OCI-LY7 (cell line): ENCODE measurements at regions of chr10 and their contacts with region 1.

Region 1: GRCh38 chr10:20927456-20927855 is 30.3 kb upstream of the NEBL start:
- DNase-seq: no peak
- H3K4me3 ChIP-seq: no peak overlapping the region
- H3K27ac ChIP-seq: no peak overlapping the region
- H3K4me1 ChIP-seq: no peaks in the 10 kb centered on the region
- CTCF ChIP-seq: no peak

Region 2: GRCh38 chr10:20877986-20878983 is 49.2 kb before region 1 on chr10:
- CTCF ChIA-PET with region 1: no interaction called
- POLR2A ChIA-PET with region 1: no interaction called
- intact Hi-C with region 1: loop called (anchors 5 kb)
- DNase-seq: no peak
- H3K4me3 ChIP-seq: no peak overlapping the region
- H3K27ac ChIP-seq: no peak overlapping the region
- H3K4me1 ChIP-seq: no peaks in the 10 kb centered on the region
- CTCF ChIP-seq: no peak